ENCODE measurements at regions of chr3 and their contacts with region 1.

Region 1: DNA sequence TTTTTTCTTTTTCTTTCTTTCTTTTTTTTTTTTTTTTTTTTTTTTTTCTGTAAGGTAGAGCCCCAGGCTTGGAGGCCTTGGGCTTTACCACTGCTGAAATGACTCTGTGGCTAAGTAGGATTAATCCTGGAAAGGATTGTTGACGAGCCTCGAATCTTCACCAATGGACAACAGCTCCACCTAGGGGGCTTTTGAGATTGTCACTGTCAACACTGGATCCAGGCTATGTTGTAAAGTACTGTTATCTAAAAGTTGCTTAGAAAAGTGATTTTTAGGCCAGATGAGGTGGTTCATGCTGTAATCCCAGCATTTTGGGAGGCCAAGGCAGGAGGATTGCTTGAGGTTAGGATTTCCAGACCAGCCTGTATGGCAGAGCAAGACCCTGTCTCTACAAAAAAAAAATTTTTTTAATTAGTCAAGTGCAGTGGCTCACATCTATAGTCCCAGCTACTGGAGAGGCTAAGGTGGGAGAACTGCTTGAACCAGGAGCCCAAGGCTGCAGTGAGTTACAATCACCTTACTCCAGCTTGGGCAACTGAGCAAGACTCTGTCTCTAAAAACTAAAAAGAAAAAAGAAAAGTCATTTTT is 41.6 kb downstream of the KLHL18 start:
- DNase-seq: no peak
- H3K4me3 ChIP-seq: no peak overlapping the region
- H3K27ac ChIP-seq: no peak overlapping the region
- H3K4me1 ChIP-seq: peaks cover 12% of the 10 kb centered on the region
- H3K27me3 ChIP-seq: no peaks in the 10 kb centered on the region
- CTCF ChIP-seq: peak; percentile 79

Region 2: DNA sequence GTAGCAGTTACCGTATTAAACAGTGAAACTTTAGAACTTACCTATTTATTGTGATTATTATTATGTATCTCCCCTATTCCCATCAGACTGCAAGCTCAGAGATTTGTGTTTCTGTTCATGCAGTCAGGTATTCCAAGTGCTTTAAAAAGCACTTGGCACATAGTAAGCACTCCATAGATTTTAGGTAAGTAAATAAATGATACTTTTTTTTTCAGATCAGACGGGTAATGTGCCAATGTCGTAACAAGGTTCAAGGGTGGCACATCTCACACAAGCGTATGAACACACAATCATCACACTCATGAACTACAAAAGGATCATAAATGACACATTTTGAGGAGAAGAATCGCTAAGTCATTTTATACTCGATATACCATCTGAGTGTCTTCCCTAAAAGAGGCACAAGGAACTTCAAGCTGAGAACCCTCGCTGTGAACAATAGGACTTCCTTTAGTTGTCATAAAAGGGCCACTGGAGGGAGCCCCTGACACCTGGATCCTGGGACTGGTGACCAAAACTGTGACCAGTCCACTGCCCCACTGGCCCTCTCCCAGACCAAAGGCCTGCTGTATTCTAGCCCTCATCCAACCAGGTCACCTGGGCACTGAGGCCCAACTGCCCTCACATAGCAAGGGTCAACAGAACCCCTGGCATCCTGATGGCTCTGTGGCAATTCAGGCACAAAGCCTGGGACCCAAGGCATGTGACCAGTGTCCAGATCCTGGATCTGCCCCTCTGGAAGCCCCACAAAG is 73.9 kb before region 1 on chr3:
- intact Hi-C with region 1: loop called (anchors 10 kb)
- DNase-seq: peak; percentile 27
- H3K4me3 ChIP-seq: no peak overlapping the region
- H3K27ac ChIP-seq: no peak overlapping the region
- H3K4me1 ChIP-seq: no peaks in the 10 kb centered on the region
- H3K27me3 ChIP-seq: no peaks in the 10 kb centered on the region
- CTCF ChIP-seq: peak; percentile 73